ENCODE measurements at regions of chr11 and their contacts with region 1.

Region 1: GRCh38 chr11:70445091-70445490 is 46.8 kb downstream of the CTTN start:
- DNase-seq: no peak
- ATAC-seq: no peak
- H3K4me3 ChIP-seq: no peak overlapping the region
- H3K27ac ChIP-seq: no peak overlapping the region
- H3K4me1 ChIP-seq: no peaks in the 10 kb centered on the region
- H3K27me3 ChIP-seq: no peaks in the 10 kb centered on the region
- CTCF ChIP-seq: no peak

Region 2: GRCh38 chr11:68677432-68677831 is 1767.7 kb before region 1 on chr11:
- CTCF ChIA-PET with region 1: no interaction called
- POLR2A ChIA-PET with region 1: interaction called, 20 read pairs
- intact Hi-C with region 1: no loop called
- DNase-seq: peak; percentile 94
- ATAC-seq: peak; percentile 96
- H3K4me3 ChIP-seq: no peak overlapping the region
- H3K27ac ChIP-seq: no peak overlapping the region
- H3K4me1 ChIP-seq: peaks cover 14% of the 10 kb centered on the region
- H3K27me3 ChIP-seq: no peaks in the 10 kb centered on the region
- CTCF ChIP-seq: no peak

Region 3: DNA sequence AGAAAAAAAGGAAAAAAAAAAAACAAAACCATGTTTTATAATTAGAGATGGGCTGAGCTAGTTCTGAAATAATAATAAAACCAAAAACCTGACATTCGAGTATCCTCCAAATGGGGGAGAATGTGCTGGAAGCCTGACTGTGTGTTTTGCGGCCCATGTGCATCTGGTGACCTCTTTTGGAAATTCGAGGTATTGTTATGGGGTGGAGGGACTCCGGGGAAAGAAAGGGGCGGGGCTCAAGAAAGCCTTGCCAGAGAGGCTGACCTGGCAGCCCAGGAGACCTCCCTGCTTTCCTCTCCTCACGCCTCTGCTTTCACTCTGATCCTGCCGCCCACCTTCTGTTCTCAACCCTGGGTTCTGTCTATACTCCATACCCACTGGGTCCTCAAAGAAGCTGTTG is 26.2 kb after region 1 on chr11:
- CTCF ChIA-PET with region 1: no interaction called
- POLR2A ChIA-PET with region 1: no interaction called
- intact Hi-C with region 1: no loop called
- DNase-seq: peak; percentile 66
- ATAC-seq: peak; percentile 70
- H3K4me3 ChIP-seq: no peak overlapping the region
- H3K27ac ChIP-seq: no peak overlapping the region
- H3K4me1 ChIP-seq: no peaks in the 10 kb centered on the region
- H3K27me3 ChIP-seq: no peaks in the 10 kb centered on the region
- CTCF ChIP-seq: peak; percentile 64